Ascending aorta (tissue), 2 donors: ENCODE measurements at regions of chr4 and their contacts with region 1.

Region 1: GRCh38 chr4:147714575-147715401 is 17.1 kb upstream of the ARHGAP10 start:
- DNase-seq: peak in 1 of 2 donors; percentile 84
- H3K4me3 ChIP-seq: no peak overlapping the region
- H3K27ac ChIP-seq: no peak overlapping the region
- H3K4me1 ChIP-seq: peaks cover 0 to 4% of the 10 kb centered on the region in 2 donors
- H3K27me3 ChIP-seq: no peaks in the 10 kb centered on the region
- CTCF ChIP-seq: no peak

Region 2: GRCh38 chr4:147816382-147817254 is 101.8 kb after region 1 on chr4:
- intact Hi-C with region 1: loop called (anchors 5 kb)
- DNase-seq: no peak
- H3K4me3 ChIP-seq: peak overlapping the region in 1 of 2 donors; percentile 15
- H3K27ac ChIP-seq: peak overlapping the region; percentile 76 to 91
- H3K4me1 ChIP-seq: peaks cover 33 to 70% of the 10 kb centered on the region in 2 donors
- H3K27me3 ChIP-seq: no peaks in the 10 kb centered on the region
- CTCF ChIP-seq: no peak